ENCODE measurements at regions of chr13 and their contacts with region 1.

Region 1: GRCh38 chr13:114110091-114110829 is 22.2 kb downstream of the RASA3 start:
- DNase-seq: peak; percentile 54 to 88 (median 84)
- ATAC-seq: peak; percentile 86
- H3K4me3 ChIP-seq: peak overlapping the region; percentile 59
- H3K4me3 Mint-ChIP-seq: peak overlapping the region; percentile 83 to 95 (median 87)
- H3K27ac ChIP-seq: peak overlapping the region; percentile 73
- H3K27ac Mint-ChIP-seq: peak overlapping the region; percentile 90 to 98 (median 96)
- H3K4me1 ChIP-seq: peaks cover 70 to 93% of the 10 kb centered on the region in 2 donors
- H3K4me1 Mint-ChIP-seq: peaks cover 54 to 90% (median 74%) of the 10 kb centered on the region in 7 donors
- H3K27me3 ChIP-seq: no peaks in the 10 kb centered on the region
- H3K27me3 Mint-ChIP-seq: no peaks in the 10 kb centered on the region

Region 2: GRCh38 chr13:113951246-113951999 is 158.8 kb before region 1 on chr13:
- CTCF ChIA-PET with region 1: no interaction called
- POLR2A ChIA-PET with region 1: no interaction called
- intact Hi-C with region 1: loop called in 1 of 2 experiments (anchors 2 kb)
- DNase-seq: peak in 8 of 9 donors; percentile 25 to 56 (median 44)
- ATAC-seq: peak; percentile 75
- H3K4me3 ChIP-seq: no peak overlapping the region
- H3K4me3 Mint-ChIP-seq: peak overlapping the region in 2 of 10 donors; percentile 34 to 45
- H3K27ac ChIP-seq: no peak overlapping the region
- H3K27ac Mint-ChIP-seq: peak overlapping the region in 1 of 9 donors; percentile 19
- H3K4me1 ChIP-seq: no peaks in the 10 kb centered on the region
- H3K4me1 Mint-ChIP-seq: peaks cover 5 to 21% (median 11%) of the 10 kb centered on the region in 7 donors
- H3K27me3 ChIP-seq: no peaks in the 10 kb centered on the region
- H3K27me3 Mint-ChIP-seq: no peaks in the 10 kb centered on the region

Region 3: GRCh38 chr13:114065141-114065925 is 44.9 kb before region 1 on chr13:
- CTCF ChIA-PET with region 1: interaction called, 9 read pairs
- POLR2A ChIA-PET with region 1: interaction called, 10 read pairs
- intact Hi-C with region 1: loop called (anchors 1 to 5 kb)
- DNase-seq: peak; percentile 42 to 74 (median 63)
- ATAC-seq: peak; percentile 77
- H3K4me3 ChIP-seq: peak overlapping the region; percentile 66
- H3K4me3 Mint-ChIP-seq: peak overlapping the region; percentile 78 to 89 (median 86)
- H3K27ac ChIP-seq: peak overlapping the region; percentile 76
- H3K27ac Mint-ChIP-seq: peak overlapping the region; percentile 86 to 99 (median 92)
- H3K4me1 ChIP-seq: peaks cover 51 to 60% of the 10 kb centered on the region in 2 donors
- H3K4me1 Mint-ChIP-seq: peaks cover 51 to 72% (median 62%) of the 10 kb centered on the region in 7 donors
- H3K27me3 ChIP-seq: no peaks in the 10 kb centered on the region
- H3K27me3 Mint-ChIP-seq: no peaks in the 10 kb centered on the region

Region 4: DNA sequence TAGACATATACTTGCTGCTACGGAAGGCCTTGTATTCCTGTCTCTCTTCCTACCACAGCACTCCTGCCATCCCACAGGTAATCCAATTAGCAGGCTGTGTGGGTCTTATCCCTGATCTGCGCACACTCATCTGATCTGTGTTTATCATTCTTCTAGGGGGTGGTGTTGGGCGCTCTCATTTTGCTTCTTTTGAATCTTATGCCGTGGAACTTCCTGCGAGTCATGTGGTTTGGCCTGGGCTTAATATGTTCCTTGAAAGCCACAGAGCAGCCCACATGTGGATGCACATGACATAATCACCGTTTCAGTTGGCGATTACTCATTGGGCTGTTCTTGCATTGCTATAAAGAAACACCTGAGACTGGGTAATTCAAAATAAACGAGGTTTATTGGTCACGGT is 14.7 kb after region 1 on chr13:
- CTCF ChIA-PET with region 1: interaction called, 6 read pairs
- POLR2A ChIA-PET with region 1: interaction called, 137 read pairs
- intact Hi-C with region 1: loop called (anchors 1 kb)
- DNase-seq: peak in 8 of 9 donors; percentile 67 to 87 (median 80)
- ATAC-seq: peak; percentile 64
- H3K4me3 ChIP-seq: peak overlapping the region; percentile 42
- H3K4me3 Mint-ChIP-seq: peak overlapping the region; percentile 58 to 88 (median 78)
- H3K27ac ChIP-seq: peak overlapping the region; percentile 53
- H3K27ac Mint-ChIP-seq: peak overlapping the region; percentile 73 to 96 (median 92)
- H3K4me1 ChIP-seq: peaks cover 90 to 95% of the 10 kb centered on the region in 2 donors
- H3K4me1 Mint-ChIP-seq: peaks cover 69 to 94% (median 88%) of the 10 kb centered on the region in 7 donors
- H3K27me3 ChIP-seq: no peaks in the 10 kb centered on the region
- H3K27me3 Mint-ChIP-seq: peaks cover 0 to 5% (median 0%) of the 10 kb centered on the region in 5 donors

Region 5: DNA sequence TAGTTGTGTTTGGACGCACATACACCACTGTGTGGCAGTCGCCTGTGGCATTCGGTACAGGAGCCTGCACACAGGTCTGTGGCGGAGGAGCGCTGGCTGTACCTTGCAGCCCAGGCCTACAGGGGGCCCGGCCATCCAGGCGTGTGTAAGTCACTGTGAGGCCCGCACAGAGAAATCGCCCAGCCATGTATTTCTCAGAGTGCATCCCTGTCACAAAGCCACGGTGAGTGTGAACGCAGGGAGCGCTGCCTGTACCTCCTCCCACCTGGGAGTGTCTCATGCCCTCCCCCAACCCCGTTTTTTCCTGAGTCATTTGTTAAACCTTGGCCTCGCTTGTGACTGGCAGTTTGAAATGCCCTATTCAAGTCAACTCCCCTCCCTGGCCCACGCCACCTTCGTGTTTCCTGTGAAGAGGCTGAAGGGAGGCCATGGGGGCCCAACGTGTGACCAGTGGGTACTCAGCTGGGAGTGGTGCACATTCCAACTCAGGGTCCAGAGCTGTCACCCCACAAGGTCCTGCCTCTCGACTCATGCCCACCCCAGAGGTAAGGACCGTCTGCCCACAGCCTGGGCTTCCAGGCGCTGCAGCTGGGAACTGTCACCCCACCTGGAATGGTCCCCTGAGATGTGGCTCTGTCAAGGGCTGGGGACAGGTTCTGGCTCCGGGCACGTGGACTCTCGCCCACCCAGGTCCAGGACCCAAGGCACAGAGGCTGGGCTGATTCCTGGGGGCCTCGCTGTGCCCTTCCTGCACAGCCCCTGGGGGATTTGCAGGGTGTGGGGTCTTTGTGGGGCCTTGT is 33.7 kb after region 1 on chr13:
- CTCF ChIA-PET with region 1: interaction called, 5 read pairs
- POLR2A ChIA-PET with region 1: interaction called, 11 read pairs
- intact Hi-C with region 1: loop called (anchors 1 kb)
- DNase-seq: peak in 3 of 9 donors; percentile 48 to 57 (median 56)
- ATAC-seq: no peak
- H3K4me3 ChIP-seq: peak overlapping the region; percentile 18
- H3K4me3 Mint-ChIP-seq: peak overlapping the region in 5 of 10 donors; percentile 48 to 67 (median 51)
- H3K27ac ChIP-seq: peak overlapping the region; percentile 74
- H3K27ac Mint-ChIP-seq: no peak overlapping the region
- H3K4me1 ChIP-seq: peaks cover 76 to 84% of the 10 kb centered on the region in 2 donors
- H3K4me1 Mint-ChIP-seq: peaks cover 31 to 48% (median 42%) of the 10 kb centered on the region in 7 donors
- H3K27me3 ChIP-seq: no peaks in the 10 kb centered on the region
- H3K27me3 Mint-ChIP-seq: peaks cover 0 to 12% (median 0%) of the 10 kb centered on the region in 5 donors

Region 6: DNA sequence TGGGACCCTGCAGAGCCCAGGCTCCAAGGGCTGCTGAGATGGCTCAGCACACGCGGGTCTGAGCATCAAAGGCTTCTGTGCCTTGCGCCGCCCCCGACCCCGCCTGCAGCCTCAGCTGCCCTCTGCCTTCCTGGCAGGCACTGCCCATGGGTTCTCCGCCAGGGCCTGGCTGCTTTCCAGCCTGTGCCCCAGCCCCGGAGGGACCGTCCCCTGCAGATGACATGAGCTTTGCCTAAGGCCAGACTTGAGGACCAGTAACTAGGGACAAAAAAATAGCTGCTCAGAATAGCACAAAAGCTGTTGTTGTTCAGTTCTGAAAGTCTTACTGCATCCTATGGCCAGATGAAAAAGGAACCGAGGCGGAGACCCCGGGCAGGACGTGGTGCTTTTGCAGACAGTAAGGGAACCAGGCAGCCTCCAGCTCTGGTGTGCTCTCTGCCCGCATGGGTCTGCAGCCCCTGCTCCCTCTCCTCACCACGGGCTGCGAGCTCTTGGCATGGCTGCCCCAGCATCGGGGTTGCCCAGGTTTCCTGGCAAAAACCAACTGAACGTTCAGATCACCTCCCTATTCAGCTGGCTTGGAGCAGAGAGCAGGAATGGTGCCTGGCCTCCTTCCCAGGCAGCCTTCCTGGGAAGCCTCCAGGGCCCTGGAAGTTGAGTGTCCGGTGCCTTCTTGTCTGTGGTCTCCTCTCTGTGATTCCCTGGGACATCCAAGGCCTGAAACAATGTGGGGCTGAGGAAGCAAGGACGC is 56.3 kb after region 1 on chr13:
- CTCF ChIA-PET with region 1: no interaction called
- POLR2A ChIA-PET with region 1: no interaction called
- intact Hi-C with region 1: no loop called
- DNase-seq: no peak
- ATAC-seq: no peak
- H3K4me3 ChIP-seq: no peak overlapping the region
- H3K4me3 Mint-ChIP-seq: peak overlapping the region in 7 of 10 donors; percentile 32 to 74 (median 49)
- H3K27ac ChIP-seq: peak overlapping the region; percentile 4
- H3K27ac Mint-ChIP-seq: peak overlapping the region in 8 of 9 donors; percentile 83 to 96 (median 88)
- H3K4me1 ChIP-seq: peaks cover 14 to 56% of the 10 kb centered on the region in 2 donors
- H3K4me1 Mint-ChIP-seq: peaks cover 36 to 71% (median 70%) of the 10 kb centered on the region in 7 donors
- H3K27me3 ChIP-seq: no peaks in the 10 kb centered on the region
- H3K27me3 Mint-ChIP-seq: peaks cover 0 to 28% (median 0%) of the 10 kb centered on the region in 5 donors

Region 7: DNA sequence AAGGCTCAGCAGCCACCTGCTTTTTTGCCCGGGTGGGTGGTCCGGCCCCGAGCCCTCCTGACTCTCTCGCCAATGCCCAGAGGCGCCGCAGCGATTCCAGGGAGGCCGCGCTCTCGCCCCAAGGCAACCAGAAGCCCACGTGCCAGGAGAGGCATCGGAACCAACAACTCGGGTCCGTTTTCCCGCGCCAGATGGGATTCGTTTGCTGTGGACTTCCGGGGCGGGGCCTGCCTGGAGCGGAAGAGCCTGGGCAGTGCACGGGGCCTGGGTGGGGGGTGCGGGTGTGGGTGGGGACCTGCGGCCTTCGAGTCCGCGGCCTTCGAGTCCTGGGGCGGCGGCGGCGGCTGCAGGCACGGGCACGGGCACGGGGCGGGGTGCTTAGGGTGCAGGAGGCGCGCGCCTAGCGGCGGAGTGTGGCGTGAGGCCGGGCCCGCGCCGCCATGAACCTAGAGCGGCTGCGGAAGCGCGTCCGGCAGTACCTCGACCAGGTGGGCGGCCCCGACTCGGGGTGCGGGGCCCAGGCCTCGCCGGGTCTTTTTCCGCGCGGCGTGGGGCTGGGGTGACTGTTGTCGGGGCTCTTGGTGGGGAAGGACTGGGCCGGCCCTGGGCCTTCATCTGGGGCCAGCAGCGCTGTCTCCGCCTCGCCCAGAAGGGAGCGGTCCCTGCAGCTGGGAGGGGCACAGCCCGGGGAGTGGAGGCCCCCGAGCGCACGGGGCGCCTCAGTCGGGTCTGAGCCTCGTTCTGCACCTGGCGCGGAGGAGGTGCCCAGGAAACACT is 124.6 kb after region 1 on chr13 and contains the start of gene CDC16:
- CTCF ChIA-PET with region 1: no interaction called
- POLR2A ChIA-PET with region 1: interaction called, 3 read pairs
- intact Hi-C with region 1: loop called in 1 of 2 experiments (anchors 2 kb)
- DNase-seq: peak; percentile 53 to 87 (median 69)
- ATAC-seq: peak; percentile 94
- H3K4me3 ChIP-seq: peak within 1 kb of the TSS; percentile 87
- H3K4me3 Mint-ChIP-seq: peak within 1 kb of the TSS; percentile 82 to 93 (median 88)
- H3K27ac ChIP-seq: peak within 1 kb of the TSS; percentile 79
- H3K27ac Mint-ChIP-seq: peak within 1 kb of the TSS; percentile 78 to 91 (median 86)
- H3K4me1 ChIP-seq: peaks cover 9 to 11% of the 10 kb centered on the region in 2 donors
- H3K4me1 Mint-ChIP-seq: peaks cover 22 to 29% (median 26%) of the 10 kb centered on the region in 7 donors
- H3K27me3 ChIP-seq: no peaks in the 10 kb centered on the region
- H3K27me3 Mint-ChIP-seq: peaks cover 0 to 12% (median 4%) of the 10 kb centered on the region in 5 donors
- total RNA-seq, gene CDC16: 66.0 to 108 (median 88.7) TPM

Measured in naive thymus-derived CD4-positive, alpha-beta T cell (primary cell).